CD8-positive, alpha-beta T cell (primary cell): ENCODE measurements at regions of chr14 and their contacts with region 1.

Region 1: GRCh38 chr14:23953464-23954278 is at the start of gene DHRS4:
- DNase-seq: peak; percentile 71 to 93 (median 83)
- ATAC-seq: peak; percentile 96
- H3K4me3 ChIP-seq: peak within 1 kb of the TSS; percentile 85 to 90
- H3K4me3 Mint-ChIP-seq: peak within 1 kb of the TSS; percentile 97
- H3K27ac ChIP-seq: peak within 1 kb of the TSS; percentile 49 to 65
- H3K27ac Mint-ChIP-seq: peak within 1 kb of the TSS; percentile 91
- H3K4me1 ChIP-seq: peaks cover 10% of the 10 kb centered on the region
- H3K4me1 Mint-ChIP-seq: peaks cover 32% of the 10 kb centered on the region
- H3K27me3 ChIP-seq: no peaks in the 10 kb centered on the region
- H3K27me3 Mint-ChIP-seq: no peaks in the 10 kb centered on the region
- CTCF ChIP-seq: peak; percentile 90
- total RNA-seq, gene DHRS4: 6.8 to 7.1 TPM

Region 2: GRCh38 chr14:23478111-23478759 is 475.4 kb before region 1 on chr14:
- CTCF ChIA-PET with region 1: no interaction called
- POLR2A ChIA-PET with region 1: no interaction called
- intact Hi-C with region 1: loop called (anchors 5 to 10 kb)
- DNase-seq: peak; percentile 27 to 80 (median 69)
- ATAC-seq: peak; percentile 82
- H3K4me3 ChIP-seq: no peak overlapping the region
- H3K4me3 Mint-ChIP-seq: no peak overlapping the region
- H3K27ac ChIP-seq: peak overlapping the region in 1 of 2 experiments; percentile 3
- H3K27ac Mint-ChIP-seq: no peak overlapping the region
- H3K4me1 ChIP-seq: no peaks in the 10 kb centered on the region
- H3K4me1 Mint-ChIP-seq: peaks cover 9% of the 10 kb centered on the region
- H3K27me3 ChIP-seq: no peaks in the 10 kb centered on the region
- H3K27me3 Mint-ChIP-seq: no peaks in the 10 kb centered on the region
- CTCF ChIP-seq: peak; percentile 79

Region 3: DNA sequence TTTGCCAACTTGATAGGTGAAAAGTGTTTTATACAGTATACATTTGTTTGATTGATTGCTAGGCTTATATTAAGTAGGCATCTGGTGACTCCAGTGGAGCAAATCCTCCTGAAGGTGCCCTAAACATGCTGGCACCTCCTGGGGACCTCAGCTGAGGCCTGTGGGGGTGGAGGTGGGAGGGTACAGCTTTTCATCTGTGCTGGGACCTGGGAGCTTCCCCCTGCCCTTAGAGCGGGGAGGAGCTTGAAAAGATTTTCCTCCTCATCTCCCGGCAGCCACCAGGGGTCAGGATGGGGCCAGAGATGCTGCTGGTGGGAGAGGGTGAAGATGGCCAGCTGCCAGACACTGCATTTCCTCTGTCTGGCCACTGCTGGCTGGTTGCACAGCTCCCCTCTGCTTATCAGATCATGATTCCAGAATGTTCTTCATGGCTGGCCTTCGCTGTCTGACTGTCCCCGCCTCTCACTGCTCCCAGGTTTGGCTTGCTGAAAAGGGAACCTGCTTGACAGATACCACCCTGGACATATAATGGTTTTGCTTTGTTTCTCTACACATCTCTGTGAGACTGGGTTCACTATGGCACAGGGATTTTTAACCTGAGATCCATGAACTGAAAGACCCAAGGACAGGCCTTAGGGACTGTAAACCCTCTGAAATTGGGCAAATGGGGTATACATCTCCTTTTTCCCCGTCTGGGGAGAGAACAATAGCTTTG is 364.6 kb before region 1 on chr14:
- CTCF ChIA-PET with region 1: interaction called, 5 read pairs
- POLR2A ChIA-PET with region 1: no interaction called
- intact Hi-C with region 1: loop called in 1 of 2 experiments (anchors 1 kb)
- DNase-seq: peak; percentile 65 to 90 (median 83)
- ATAC-seq: peak; percentile 94
- H3K4me3 ChIP-seq: no peak overlapping the region
- H3K4me3 Mint-ChIP-seq: no peak overlapping the region
- H3K27ac ChIP-seq: no peak overlapping the region
- H3K27ac Mint-ChIP-seq: no peak overlapping the region
- H3K4me1 ChIP-seq: peaks cover 9% of the 10 kb centered on the region
- H3K4me1 Mint-ChIP-seq: peaks cover 11% of the 10 kb centered on the region
- H3K27me3 ChIP-seq: no peaks in the 10 kb centered on the region
- H3K27me3 Mint-ChIP-seq: peaks cover 16% of the 10 kb centered on the region
- CTCF ChIP-seq: peak; percentile 65

Region 4: DNA sequence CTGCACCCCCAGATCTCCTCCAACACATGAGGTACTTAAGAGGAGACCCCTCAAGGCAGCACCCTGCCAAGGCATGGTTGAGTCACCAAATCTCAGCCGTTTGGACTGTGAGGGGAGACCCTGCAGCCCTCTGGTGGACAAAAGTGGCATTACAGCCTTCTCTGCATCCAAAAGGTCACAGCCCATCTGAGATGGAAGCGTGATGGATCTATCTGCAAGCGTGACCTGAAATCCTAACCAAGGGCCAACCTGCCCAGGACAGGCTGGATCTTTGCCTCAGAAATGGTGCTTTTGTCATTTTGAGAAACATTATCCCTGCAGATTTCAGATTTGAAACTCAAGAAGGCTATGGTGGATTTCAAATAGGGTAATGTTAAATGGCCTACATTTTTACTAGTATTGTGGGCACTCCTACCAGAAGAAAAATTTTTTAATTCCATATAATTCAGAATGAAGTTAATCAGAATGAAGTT is 23.8 kb before region 1 on chr14:
- CTCF ChIA-PET with region 1: interaction called, 9 read pairs
- POLR2A ChIA-PET with region 1: no interaction called
- intact Hi-C with region 1: loop called in 1 of 2 experiments (anchors 1 kb)
- DNase-seq: peak; percentile 69 to 91 (median 83)
- ATAC-seq: peak; percentile 98
- H3K4me3 ChIP-seq: no peak overlapping the region
- H3K4me3 Mint-ChIP-seq: no peak overlapping the region
- H3K27ac ChIP-seq: no peak overlapping the region
- H3K27ac Mint-ChIP-seq: no peak overlapping the region
- H3K4me1 ChIP-seq: no peaks in the 10 kb centered on the region
- H3K4me1 Mint-ChIP-seq: peaks cover 4% of the 10 kb centered on the region
- H3K27me3 ChIP-seq: peaks cover 0 to 3% of the 10 kb centered on the region in 2 experiments
- H3K27me3 Mint-ChIP-seq: no peaks in the 10 kb centered on the region
- CTCF ChIP-seq: peak; percentile 96

Region 5: DNA sequence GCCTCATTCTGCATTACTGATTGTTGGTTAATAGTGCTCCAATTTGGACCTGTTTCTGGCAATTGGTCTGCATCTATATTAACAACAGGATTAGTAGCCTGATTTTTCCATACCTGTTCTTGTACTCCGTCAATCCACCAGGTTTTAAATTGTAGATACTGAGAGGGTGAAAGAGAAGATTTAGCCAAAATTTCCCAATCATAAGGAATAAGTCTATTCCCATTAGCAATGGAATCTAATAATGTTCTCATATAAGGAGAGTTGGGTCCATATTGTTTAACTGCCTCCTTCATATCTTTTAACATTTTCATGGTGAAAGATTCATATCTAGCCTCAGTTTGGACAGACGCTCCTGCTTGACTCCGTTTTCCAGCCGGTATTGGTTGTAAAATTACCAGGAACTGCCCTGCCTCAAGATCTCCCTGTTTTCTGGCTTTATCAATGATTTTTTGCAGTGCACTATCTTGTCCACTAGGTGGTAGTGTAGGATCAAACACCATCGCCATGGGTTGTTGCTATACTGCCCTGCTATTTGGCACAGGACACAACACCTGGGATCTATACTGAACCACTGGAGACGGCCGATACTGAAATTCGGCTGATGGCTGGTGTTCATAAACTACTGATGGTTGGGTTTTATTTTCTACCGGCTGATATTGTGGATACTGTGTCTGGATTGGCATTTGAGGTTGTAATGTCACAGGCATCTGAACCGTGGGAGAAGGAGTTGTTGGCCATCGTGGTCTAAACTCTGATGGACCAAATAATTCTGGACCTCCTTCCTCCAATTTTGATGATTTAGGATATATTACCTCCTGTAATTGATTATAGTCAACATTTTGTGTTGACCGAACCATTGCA is 60.2 kb after region 1 on chr14:
- CTCF ChIA-PET with region 1: no interaction called
- POLR2A ChIA-PET with region 1: no interaction called
- intact Hi-C with region 1: loop called in 1 of 2 experiments (anchors 5 kb)
- DNase-seq: peak in 8 of 9 experiments; percentile 14 to 84 (median 50)
- ATAC-seq: peak; percentile 99
- H3K4me3 ChIP-seq: no peak overlapping the region
- H3K4me3 Mint-ChIP-seq: no peak overlapping the region
- H3K27ac ChIP-seq: no peak overlapping the region
- H3K27ac Mint-ChIP-seq: no peak overlapping the region
- H3K4me1 ChIP-seq: peaks cover 7% of the 10 kb centered on the region
- H3K4me1 Mint-ChIP-seq: peaks cover 25% of the 10 kb centered on the region
- H3K27me3 ChIP-seq: no peaks in the 10 kb centered on the region
- H3K27me3 Mint-ChIP-seq: no peaks in the 10 kb centered on the region
- CTCF ChIP-seq: peak; percentile 93

Region 6: DNA sequence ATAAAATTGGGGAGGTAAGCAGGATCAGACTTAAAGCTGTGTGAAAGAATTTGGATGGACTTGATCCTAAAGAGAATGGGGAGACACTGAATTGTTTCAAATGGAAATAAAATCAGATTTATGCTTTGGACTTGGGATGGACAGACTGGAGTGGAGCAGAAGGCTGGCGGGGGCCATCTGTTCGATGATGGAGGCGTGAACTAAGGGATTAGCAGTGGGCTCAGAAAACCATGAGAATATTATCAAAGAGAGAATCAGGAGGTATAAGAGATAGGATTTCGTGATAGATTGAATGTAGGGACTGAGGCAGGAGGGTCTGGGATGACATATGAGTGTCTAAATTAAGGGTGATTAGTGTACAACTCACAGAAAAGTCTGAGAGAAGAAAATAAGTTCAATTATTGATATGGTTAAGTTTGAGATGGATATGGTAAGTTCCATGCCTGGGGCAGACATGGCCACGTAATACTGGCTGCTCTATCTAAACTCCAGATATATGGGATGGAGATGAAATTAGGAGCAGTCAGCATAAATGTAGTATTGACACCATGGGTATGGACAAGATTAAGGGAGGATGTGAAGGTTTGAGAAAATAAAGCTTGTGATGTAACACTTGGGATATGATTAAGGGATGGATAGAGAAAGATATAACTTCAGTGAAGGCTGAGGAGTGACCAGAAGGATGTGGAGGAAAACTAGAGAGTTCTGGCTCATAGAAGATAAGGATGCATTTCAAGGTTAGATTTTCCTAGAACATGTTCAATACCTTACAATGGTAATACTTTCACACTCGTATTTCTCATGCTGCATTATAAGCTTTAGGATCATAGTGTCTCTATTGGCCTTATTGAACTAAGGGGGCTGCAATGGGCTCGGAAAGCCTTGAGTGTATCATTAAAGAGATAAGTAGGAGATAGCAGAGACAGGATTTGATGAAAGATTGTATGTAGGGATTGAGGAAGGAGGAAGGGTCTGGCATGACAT is 250.8 kb after region 1 on chr14:
- CTCF ChIA-PET with region 1: no interaction called
- POLR2A ChIA-PET with region 1: no interaction called
- intact Hi-C with region 1: no loop called
- DNase-seq: no peak
- ATAC-seq: no peak
- H3K4me3 ChIP-seq: no peak overlapping the region
- H3K4me3 Mint-ChIP-seq: no peak overlapping the region
- H3K27ac ChIP-seq: no peak overlapping the region
- H3K27ac Mint-ChIP-seq: peak overlapping the region; percentile 12
- H3K4me1 ChIP-seq: no peaks in the 10 kb centered on the region
- H3K4me1 Mint-ChIP-seq: peaks cover 32% of the 10 kb centered on the region
- H3K27me3 ChIP-seq: no peaks in the 10 kb centered on the region
- H3K27me3 Mint-ChIP-seq: no peaks in the 10 kb centered on the region
- CTCF ChIP-seq: no peak

Region 7: DNA sequence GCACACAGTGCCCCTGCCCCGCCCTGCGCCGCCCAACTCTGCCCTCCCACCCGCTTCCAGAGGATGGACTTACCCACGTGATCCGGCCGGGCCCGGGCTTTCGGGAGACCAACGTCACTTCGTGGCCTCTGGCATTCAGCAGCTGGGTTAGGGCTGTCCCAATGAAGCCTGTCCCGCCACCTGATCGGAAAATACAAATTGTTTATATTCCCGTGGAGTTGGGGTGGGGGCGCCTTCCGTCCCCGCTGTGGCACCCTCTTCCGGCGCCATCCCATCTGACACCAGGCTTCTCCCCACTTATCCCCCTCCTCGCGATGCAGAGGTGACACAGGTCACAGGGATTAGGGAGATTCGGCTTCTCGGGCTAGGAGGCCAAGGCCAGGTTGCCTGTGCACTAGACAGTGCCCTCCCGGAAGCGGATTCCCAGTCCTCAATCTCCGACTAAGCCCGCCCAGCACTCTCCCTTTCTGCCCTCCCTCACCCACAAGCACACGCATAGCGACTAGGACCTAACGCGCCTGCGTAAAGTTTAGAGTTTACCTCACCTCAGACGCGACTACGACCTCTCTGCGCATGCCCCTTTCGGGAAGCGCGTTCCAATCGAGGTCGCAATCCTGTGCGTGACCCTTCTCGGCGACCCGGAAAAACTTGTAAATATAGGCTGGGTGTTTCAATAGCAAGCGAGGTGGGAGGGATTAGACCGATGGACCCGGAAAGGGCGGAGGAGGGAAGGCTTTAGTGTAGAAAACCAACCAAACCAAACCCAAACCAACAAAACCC is 488.8 kb after region 1 on chr14 and contains the start of gene SDR39U1:
- CTCF ChIA-PET with region 1: no interaction called
- POLR2A ChIA-PET with region 1: no interaction called
- intact Hi-C with region 1: loop called in 1 of 2 experiments (anchors 10 kb)
- DNase-seq: peak; percentile 93 to 100 (median 95)
- ATAC-seq: peak; percentile 89
- H3K4me3 ChIP-seq: peak within 1 kb of the TSS; percentile 77 to 89
- H3K4me3 Mint-ChIP-seq: peak within 1 kb of the TSS; percentile 95
- H3K27ac ChIP-seq: peak within 1 kb of the TSS; percentile 96
- H3K27ac Mint-ChIP-seq: peak within 1 kb of the TSS; percentile 97
- H3K4me1 ChIP-seq: peaks cover 35% of the 10 kb centered on the region
- H3K4me1 Mint-ChIP-seq: peaks cover 45% of the 10 kb centered on the region
- H3K27me3 ChIP-seq: no peaks in the 10 kb centered on the region
- H3K27me3 Mint-ChIP-seq: no peaks in the 10 kb centered on the region
- CTCF ChIP-seq: no peak
- total RNA-seq, gene SDR39U1: 75.0 to 84.4 TPM